Activated B cell treated with CpG ODN at 0.5 μM for 24 hours (primary cell): ENCODE measurements at regions of chr6 and their contacts with region 1.

Region 1: DNA sequence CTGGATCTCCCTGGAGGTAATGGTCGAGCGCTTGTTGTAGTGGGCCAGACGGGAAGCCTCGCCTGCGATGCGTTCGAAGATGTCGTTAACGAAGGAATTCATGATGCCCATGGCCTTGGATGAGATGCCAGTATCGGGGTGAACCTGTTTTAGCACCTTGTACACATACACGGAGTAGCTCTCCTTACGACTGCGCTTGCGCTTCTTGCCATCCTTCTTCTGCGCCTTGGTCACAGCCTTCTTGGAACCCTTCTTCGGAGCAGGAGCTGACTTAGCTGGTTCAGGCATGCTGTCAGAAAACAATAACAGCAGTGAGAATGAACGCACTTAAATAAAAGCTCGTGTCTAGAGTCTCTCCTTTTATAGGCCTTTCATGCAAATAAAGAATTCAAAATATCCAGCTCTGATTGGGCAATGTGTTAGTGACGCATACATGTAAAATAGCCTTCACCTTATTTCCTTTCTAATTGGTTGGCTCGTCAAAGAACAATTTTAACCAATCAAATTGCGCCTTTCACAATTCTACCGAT is 129.2 kb downstream of the HFE start:
- DNase-seq: peak; percentile 62
- ATAC-seq: peak; percentile 78
- H3K4me3 Mint-ChIP-seq: no peak overlapping the region
- H3K27ac Mint-ChIP-seq: no peak overlapping the region
- H3K4me1 Mint-ChIP-seq: peaks cover 12% of the 10 kb centered on the region
- H3K27me3 Mint-ChIP-seq: no peaks in the 10 kb centered on the region
- CTCF ChIP-seq: no peak

Region 2: DNA sequence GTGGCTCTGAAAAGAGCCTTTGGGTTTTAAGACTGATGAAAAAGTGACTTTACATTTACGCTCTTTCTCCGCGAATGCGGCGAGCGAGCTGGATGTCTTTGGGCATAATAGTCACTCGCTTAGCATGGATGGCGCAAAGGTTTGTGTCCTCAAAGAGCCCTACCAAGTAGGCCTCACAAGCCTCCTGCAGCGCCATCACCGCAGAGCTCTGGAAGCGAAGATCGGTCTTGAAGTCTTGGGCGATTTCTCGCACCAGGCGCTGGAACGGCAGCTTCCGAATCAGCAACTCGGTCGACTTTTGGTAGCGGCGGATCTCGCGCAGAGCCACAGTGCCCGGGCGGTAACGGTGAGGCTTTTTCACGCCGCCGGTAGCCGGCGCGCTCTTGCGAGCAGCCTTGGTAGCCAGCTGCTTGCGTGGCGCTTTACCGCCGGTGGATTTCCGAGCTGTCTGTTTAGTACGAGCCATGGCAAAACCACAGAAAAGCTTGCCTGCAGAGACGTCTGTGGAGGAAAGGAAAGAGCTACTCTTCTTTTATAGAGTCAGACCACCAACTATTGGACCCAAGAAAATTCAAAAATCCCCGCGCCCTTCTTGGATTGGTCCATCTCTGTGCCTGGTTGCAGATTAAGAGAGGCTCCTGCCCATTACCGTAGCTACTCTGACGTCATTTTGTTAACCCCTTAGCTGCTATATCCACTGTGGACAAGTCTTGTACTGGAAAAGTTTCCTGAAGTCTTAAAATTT is 184.7 kb before region 1 on chr6:
- CTCF ChIA-PET with region 1: no interaction called
- POLR2A ChIA-PET with region 1: interaction called, 21 read pairs
- intact Hi-C with region 1: loop called (anchors 5 kb)
- DNase-seq: peak; percentile 55
- ATAC-seq: peak; percentile 62
- H3K4me3 Mint-ChIP-seq: peak overlapping the region; percentile 93
- H3K27ac Mint-ChIP-seq: peak overlapping the region; percentile 98
- H3K4me1 Mint-ChIP-seq: peaks cover 40% of the 10 kb centered on the region
- H3K27me3 Mint-ChIP-seq: peaks cover 2% of the 10 kb centered on the region
- CTCF ChIP-seq: no peak

Region 3: GRCh38 chr6:26183581-26184366 is 32.6 kb before region 1 on chr6:
- CTCF ChIA-PET with region 1: interaction called, 8 read pairs
- POLR2A ChIA-PET with region 1: interaction called, 112 read pairs
- intact Hi-C with region 1: no loop called
- DNase-seq: peak; percentile 60
- ATAC-seq: peak; percentile 86
- H3K4me3 Mint-ChIP-seq: peak overlapping the region; percentile 98
- H3K27ac Mint-ChIP-seq: peak overlapping the region; percentile 91
- H3K4me1 Mint-ChIP-seq: peaks cover 30% of the 10 kb centered on the region
- H3K27me3 Mint-ChIP-seq: no peaks in the 10 kb centered on the region
- CTCF ChIP-seq: no peak

Region 4: GRCh38 chr6:26249957-26250697 is 33.7 kb after region 1 on chr6:
- CTCF ChIA-PET with region 1: interaction called, 12 read pairs
- POLR2A ChIA-PET with region 1: interaction called, 3 read pairs
- intact Hi-C with region 1: loop called (anchors 1 kb)
- DNase-seq: peak; percentile 57
- ATAC-seq: peak; percentile 63
- H3K4me3 Mint-ChIP-seq: peak overlapping the region; percentile 94
- H3K27ac Mint-ChIP-seq: peak overlapping the region; percentile 90
- H3K4me1 Mint-ChIP-seq: peaks cover 36% of the 10 kb centered on the region
- H3K27me3 Mint-ChIP-seq: no peaks in the 10 kb centered on the region
- CTCF ChIP-seq: no peak

Region 5: DNA sequence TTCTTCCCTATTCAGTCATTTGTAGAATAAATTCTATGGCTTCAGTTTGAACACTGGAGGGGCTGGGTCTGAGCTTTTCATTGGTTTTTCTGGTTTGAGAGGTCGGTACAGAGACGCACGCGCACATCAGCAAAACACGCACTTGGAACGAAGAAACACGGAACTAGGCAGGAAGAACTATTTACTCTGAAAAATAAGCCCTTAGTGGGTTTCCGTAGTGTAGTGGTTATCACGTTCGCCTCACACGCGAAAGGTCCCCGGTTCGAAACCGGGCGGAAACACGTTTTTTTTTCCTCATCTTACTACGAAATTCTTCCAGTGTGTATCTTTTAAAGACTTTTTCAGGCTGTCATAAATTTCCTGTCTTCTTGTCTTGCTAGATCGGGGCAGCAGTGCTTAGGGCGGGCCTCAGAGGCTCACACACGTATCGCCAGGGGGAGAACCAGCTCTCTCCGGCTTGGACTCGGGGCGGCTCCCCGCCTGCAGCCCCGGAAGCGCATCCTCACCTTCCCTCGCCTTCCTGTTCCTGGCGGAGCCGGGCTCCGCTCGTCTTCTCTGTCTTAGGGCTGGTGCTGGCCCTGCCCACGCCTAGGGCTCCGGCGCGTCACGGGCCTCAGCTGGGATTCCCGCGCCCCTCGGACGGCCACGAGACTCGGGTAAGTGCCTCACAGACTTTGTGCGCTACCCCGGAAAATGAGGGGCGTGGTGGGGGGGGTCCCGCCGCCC is 321.6 kb after region 1 on chr6 and contains the start of gene HMGN4:
- CTCF ChIA-PET with region 1: no interaction called
- POLR2A ChIA-PET with region 1: interaction called, 25 read pairs
- intact Hi-C with region 1: no loop called
- DNase-seq: peak; percentile 73
- ATAC-seq: peak; percentile 67
- H3K4me3 Mint-ChIP-seq: peak within 1 kb of the TSS; percentile 98
- H3K27ac Mint-ChIP-seq: peak within 1 kb of the TSS; percentile 97
- H3K4me1 Mint-ChIP-seq: peaks cover 65% of the 10 kb centered on the region
- H3K27me3 Mint-ChIP-seq: peaks cover 7% of the 10 kb centered on the region
- CTCF ChIP-seq: no peak
- total RNA-seq, gene HMGN4: 74.5 and 82.2 TPM in 2 replicates

Region 6: DNA sequence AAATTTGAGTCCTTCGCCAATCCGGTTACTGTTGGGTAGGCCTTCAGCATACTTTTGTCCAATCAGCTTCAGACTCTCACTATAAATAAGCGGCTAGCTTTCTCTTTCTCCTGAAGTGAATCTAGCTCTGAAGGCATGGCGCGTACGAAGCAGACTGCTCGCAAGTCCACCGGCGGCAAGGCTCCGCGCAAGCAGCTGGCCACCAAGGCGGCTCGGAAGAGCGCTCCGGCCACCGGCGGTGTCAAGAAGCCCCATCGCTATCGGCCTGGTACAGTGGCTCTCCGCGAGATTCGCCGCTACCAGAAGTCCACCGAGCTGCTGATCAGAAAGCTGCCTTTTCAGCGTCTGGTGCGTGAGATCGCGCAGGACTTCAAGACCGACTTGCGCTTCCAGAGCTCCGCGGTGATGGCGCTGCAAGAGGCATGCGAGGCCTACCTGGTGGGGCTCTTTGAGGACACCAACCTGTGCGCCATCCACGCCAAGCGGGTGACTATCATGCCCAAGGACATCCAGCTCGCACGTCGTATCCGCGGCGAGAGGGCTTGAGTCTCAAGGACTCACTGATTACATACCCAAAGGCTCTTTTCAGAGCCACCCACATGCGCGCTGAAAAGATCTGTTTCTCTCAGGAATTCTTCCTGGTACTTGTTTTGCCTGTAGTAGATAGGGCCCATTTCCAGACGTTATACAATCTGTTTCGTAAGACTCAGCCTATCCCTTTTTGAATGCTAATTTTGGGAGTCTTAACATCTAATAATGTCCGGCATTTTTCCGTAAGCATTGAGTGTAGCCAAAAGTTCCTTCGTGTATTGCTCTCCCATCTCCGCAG is 1593.7 kb after region 1 on chr6:
- CTCF ChIA-PET with region 1: no interaction called
- POLR2A ChIA-PET with region 1: interaction called, 22 read pairs
- intact Hi-C with region 1: no loop called
- DNase-seq: peak; percentile 68
- ATAC-seq: peak; percentile 59
- H3K4me3 Mint-ChIP-seq: peak overlapping the region; percentile 93
- H3K27ac Mint-ChIP-seq: peak overlapping the region; percentile 97
- H3K4me1 Mint-ChIP-seq: peaks cover 59% of the 10 kb centered on the region
- H3K27me3 Mint-ChIP-seq: no peaks in the 10 kb centered on the region
- CTCF ChIP-seq: no peak